Aorta (tissue), 5 donors: ENCODE measurements at regions of chr14 and their contacts with region 1.

Region 1: DNA sequence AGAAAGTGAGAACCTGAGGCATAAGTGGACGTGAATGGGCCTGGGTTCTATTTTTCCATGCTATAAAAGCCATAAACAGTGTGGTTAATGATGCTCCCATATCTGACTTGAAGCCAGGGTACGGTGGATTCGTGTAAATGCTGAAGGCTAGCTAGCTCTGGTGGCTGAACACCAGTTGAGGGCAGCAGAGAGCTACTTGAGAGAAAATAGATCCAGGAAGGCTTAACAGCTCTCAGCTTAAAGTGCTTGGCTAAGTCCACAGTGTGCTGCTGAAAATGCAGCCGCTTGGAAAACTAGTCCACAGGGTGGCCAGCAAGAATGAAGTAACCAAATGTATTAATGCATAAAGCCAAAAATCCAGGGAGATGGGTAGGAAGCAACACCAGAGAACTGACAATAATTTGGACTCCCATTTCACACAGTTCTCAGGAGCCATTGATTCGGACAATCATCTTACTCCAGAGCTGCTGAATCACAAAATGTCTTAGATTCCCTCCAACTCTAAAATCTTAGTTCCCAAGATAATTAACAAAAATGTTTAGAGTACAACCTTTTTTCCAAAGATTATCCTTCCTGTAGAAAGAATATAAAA is 15.0 kb upstream of the FOXG1 start:
- DNase-seq: no peak
- ATAC-seq: no peak
- H3K4me3 ChIP-seq: no peak overlapping the region
- H3K27ac ChIP-seq: no peak overlapping the region
- H3K4me1 ChIP-seq: no peaks in the 10 kb centered on the region
- H3K27me3 ChIP-seq: peaks cover 0 to 3% of the 10 kb centered on the region in 2 donors

Region 2: GRCh38 chr14:29222671-29223268 is 471.2 kb after region 1 on chr14:
- intact Hi-C with region 1: loop called in 1 of 2 experiments (anchors 5 kb)
- DNase-seq: no peak
- ATAC-seq: no peak
- H3K4me3 ChIP-seq: no peak overlapping the region
- H3K27ac ChIP-seq: no peak overlapping the region
- H3K4me1 ChIP-seq: no peaks in the 10 kb centered on the region
- H3K27me3 ChIP-seq: no peaks in the 10 kb centered on the region

Region 3: GRCh38 chr14:29536886-29537511 is 785.4 kb after region 1 on chr14:
- intact Hi-C with region 1: loop called (anchors 5 to 10 kb)
- DNase-seq: no peak
- ATAC-seq: no peak
- H3K4me3 ChIP-seq: no peak overlapping the region
- H3K27ac ChIP-seq: no peak overlapping the region
- H3K4me1 ChIP-seq: no peaks in the 10 kb centered on the region
- H3K27me3 ChIP-seq: no peaks in the 10 kb centered on the region